ENCODE measurements at regions of chr3 and their contacts with region 1.

Region 1: GRCh38 chr3:138923531-138923994 is 23.4 kb downstream of the FOXL2 start:
- DNase-seq: peak; percentile 92
- H3K4me3 ChIP-seq: no peak overlapping the region
- H3K27ac ChIP-seq: no peak overlapping the region
- H3K4me1 ChIP-seq: no peaks in the 10 kb centered on the region
- H3K27me3 ChIP-seq: no peaks in the 10 kb centered on the region
- CTCF ChIP-seq: peak; percentile 90

Region 2: GRCh38 chr3:138417559-138417982 is 506.0 kb before region 1 on chr3:
- intact Hi-C with region 1: loop called (anchors 5 kb)
- DNase-seq: peak; percentile 77
- H3K4me3 ChIP-seq: no peak overlapping the region
- H3K27ac ChIP-seq: no peak overlapping the region
- H3K4me1 ChIP-seq: no peaks in the 10 kb centered on the region
- H3K27me3 ChIP-seq: no peaks in the 10 kb centered on the region
- CTCF ChIP-seq: peak; percentile 87

Region 3: GRCh38 chr3:138479438-138479863 is 444.1 kb before region 1 on chr3:
- intact Hi-C with region 1: loop called (anchors 5 kb)
- DNase-seq: peak; percentile 40
- H3K4me3 ChIP-seq: no peak overlapping the region
- H3K27ac ChIP-seq: no peak overlapping the region
- H3K4me1 ChIP-seq: no peaks in the 10 kb centered on the region
- H3K27me3 ChIP-seq: no peaks in the 10 kb centered on the region
- CTCF ChIP-seq: peak; percentile 47

Region 4: DNA sequence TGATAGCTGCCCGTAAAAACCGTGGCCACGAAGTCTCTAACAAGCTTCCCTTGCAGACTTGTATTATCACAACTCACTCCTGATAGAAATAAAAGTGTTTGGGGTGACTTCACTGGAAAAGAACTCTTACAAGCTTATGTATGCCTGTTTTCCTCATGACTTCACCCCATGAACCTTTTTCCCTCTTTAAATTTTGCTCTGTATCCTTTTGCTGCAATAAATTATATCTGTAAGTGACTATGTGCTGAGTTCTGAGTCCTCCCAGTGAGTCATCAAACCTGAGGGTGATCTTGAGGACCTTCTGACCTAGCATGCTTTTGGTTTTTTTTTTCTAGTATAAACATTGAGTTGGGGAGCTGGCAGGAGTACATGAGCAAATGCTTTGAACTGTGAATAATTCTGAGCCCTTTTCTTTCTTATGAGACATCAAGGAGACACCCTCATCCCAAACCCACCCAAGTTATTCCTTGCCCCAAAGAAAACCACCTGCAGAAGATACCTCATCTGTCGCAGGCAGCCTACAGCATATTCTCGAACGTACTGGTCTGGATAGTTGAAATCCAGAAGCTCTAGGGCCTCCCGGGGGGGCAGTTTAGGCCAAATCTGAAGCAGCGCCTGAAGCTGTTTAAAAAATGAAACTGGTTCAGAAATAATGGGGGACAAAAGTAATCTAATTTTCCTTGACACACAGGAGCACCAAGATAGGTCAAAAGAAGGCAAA is 229.1 kb before region 1 on chr3:
- intact Hi-C with region 1: loop called (anchors 2 kb)
- DNase-seq: no peak
- H3K4me3 ChIP-seq: no peak overlapping the region
- H3K27ac ChIP-seq: no peak overlapping the region
- H3K4me1 ChIP-seq: no peaks in the 10 kb centered on the region
- H3K27me3 ChIP-seq: no peaks in the 10 kb centered on the region
- CTCF ChIP-seq: no peak

Region 5: DNA sequence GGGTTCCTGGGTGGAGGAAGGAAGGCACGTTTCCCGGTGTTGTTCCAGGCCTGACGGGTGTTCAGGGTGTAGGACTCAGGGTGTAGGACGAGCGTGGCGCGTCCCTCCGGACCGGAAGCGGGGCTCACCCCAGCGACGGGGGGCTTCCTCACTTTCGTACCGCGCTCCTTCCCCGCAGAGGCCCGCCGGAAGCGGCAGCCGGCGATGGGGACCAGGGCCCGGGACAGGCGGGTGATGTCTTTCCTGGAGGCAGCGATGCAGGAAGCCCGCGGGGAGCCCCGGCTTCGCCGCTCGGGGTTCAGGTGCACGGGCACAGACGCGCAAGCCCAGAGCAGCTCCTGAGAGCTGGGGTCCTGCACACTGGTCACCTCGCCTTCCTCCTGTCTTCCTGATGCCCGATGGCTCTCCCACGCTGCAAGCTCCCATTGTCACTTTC is 36.9 kb after region 1 on chr3:
- intact Hi-C with region 1: no loop called
- DNase-seq: no peak
- H3K4me3 ChIP-seq: no peak overlapping the region
- H3K27ac ChIP-seq: no peak overlapping the region
- H3K4me1 ChIP-seq: no peaks in the 10 kb centered on the region
- H3K27me3 ChIP-seq: peaks cover 18% of the 10 kb centered on the region
- CTCF ChIP-seq: no peak